ENCODE measurements at regions of chr1 and their contacts with region 1.

Region 1: GRCh38 chr1:212179394-212180076 is 105.7 kb upstream of the PPP2R5A start:
- DNase-seq: peak; percentile 97
- H3K4me3 ChIP-seq: no peak overlapping the region
- H3K27ac ChIP-seq: peak overlapping the region; percentile 73
- H3K4me1 ChIP-seq: peaks cover 14% of the 10 kb centered on the region
- H3K27me3 ChIP-seq: no peaks in the 10 kb centered on the region

Region 2: DNA sequence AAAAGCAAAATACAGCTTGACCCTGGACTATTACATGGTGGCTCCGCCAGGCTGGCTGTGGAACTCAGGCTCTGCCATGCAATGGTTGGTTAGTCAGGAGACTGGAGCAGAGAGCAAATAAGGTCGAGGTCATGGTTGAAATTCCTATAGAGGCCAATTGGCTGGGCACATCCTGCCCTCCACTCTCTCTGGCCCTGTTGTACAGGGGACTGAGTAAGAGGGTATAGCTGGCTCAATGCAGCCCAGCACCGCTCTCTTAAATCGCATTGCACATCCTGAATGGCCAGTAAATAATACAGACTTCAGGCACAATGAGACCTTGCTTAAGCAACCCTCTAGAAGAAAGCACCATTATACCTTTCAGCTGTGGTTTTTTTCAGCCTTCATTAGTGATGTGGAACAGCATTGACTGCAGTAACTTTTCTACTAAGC is 46.4 kb after region 1 on chr1:
- in situ Hi-C with region 1: loop called (anchors 5 kb)
- DNase-seq: no peak
- H3K4me3 ChIP-seq: no peak overlapping the region
- H3K27ac ChIP-seq: no peak overlapping the region
- H3K4me1 ChIP-seq: peaks cover 11% of the 10 kb centered on the region
- H3K27me3 ChIP-seq: no peaks in the 10 kb centered on the region

Region 3: DNA sequence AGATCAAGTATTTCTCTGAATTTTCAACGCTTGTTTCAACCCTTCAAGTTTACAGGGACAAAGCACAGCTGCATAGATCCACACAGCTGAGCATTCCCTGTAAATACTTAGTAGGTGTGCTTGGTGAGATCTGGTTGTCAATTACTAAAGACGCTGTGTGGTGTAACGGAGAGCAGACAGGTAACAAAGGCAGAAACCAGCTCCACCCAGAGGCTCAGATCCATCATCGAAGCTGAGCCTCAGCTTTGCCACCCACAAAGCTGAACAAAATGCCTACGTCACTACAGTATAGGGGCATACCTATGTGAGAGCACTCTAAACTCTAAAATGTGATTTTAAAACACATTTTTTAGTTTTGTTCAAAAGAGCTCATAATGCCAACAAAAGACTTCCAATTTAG is 196.5 kb after region 1 on chr1:
- in situ Hi-C with region 1: no loop called
- DNase-seq: no peak
- H3K4me3 ChIP-seq: no peak overlapping the region
- H3K27ac ChIP-seq: no peak overlapping the region
- H3K4me1 ChIP-seq: no peaks in the 10 kb centered on the region
- H3K27me3 ChIP-seq: no peaks in the 10 kb centered on the region